Activated CD4-positive, alpha-beta T cell treated with anti-CD3 and anti-CD28 coated beads for 36 hours (primary cell): ENCODE measurements at regions of chr19 and their contacts with region 1.

Region 1: GRCh38 chr19:18588611-18589379 is at the start of gene REX1BD:
- DNase-seq: peak; percentile 91
- ATAC-seq: peak; percentile 81
- H3K4me3 Mint-ChIP-seq: peak within 1 kb of the TSS; percentile 90
- H3K27ac Mint-ChIP-seq: peak within 1 kb of the TSS; percentile 92
- H3K4me1 Mint-ChIP-seq: peaks cover 31% of the 10 kb centered on the region
- H3K27me3 Mint-ChIP-seq: no peaks in the 10 kb centered on the region
- total RNA-seq, gene REX1BD: 47.8 to 81.3 TPM

Region 2: DNA sequence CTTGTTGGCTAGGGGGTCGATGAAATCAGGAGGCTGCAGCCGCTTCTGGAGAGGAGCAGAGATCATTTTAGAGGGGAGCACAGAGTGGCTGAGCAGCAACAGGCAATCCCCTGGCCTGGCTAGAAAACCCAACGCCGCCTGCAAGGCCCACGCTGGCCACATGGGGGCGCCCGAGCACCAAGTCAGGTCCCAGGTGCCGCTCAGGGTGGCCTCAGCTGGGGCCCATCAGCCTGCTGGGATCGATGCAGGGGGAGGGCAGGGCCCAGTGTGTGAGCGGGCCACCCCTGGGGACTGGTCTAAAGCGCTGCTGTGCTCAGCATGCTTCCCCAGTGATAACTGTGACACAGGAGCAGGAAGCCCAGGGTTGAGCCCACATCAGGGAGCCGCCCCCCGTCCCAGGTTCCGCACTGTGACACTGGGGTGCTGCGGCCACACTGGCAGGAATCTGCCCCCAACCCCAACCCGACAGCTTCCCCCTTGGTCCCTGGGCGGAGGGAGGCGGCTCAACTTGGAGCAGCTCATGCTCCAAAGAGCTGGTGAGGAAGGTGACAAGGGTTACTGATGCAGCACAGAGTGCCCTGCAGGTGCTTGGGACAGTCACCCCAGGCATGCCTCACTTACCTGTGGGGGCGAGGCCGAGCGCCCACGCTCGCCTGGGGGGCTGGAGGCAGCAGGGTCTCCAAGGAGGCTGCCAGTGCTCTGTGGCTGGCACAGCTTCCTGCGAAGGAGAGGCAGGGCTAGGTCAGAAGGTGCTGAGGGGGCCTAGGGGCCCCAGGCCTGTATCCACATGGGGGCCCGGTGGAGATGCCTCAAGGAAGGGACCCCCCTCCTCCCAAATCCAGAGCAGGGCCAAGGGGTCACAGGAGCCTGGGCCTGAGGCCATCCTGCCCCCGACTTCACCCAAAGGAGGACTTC is 137.6 kb before region 1 on chr19:
- CTCF ChIA-PET with region 1: no interaction called
- POLR2A ChIA-PET with region 1: no interaction called
- intact Hi-C with region 1: loop called in 1 of 2 experiments (anchors 5 kb)
- DNase-seq: peak; percentile 94
- ATAC-seq: peak; percentile 95
- H3K4me3 Mint-ChIP-seq: no peak overlapping the region
- H3K27ac Mint-ChIP-seq: peak overlapping the region; percentile 51
- H3K4me1 Mint-ChIP-seq: no peaks in the 10 kb centered on the region
- H3K27me3 Mint-ChIP-seq: no peaks in the 10 kb centered on the region

Region 3: GRCh38 chr19:18557474-18558201 is 31.2 kb before region 1 on chr19 and contains the start of gene KXD1:
- CTCF ChIA-PET with region 1: interaction called, 6 read pairs
- POLR2A ChIA-PET with region 1: interaction called, 11 read pairs
- intact Hi-C with region 1: loop called in 1 of 2 experiments (anchors 1 kb)
- DNase-seq: peak; percentile 99
- ATAC-seq: peak; percentile 99
- H3K4me3 Mint-ChIP-seq: peak within 1 kb of the TSS; percentile 91
- H3K27ac Mint-ChIP-seq: peak within 1 kb of the TSS; percentile 95
- H3K4me1 Mint-ChIP-seq: peaks cover 20% of the 10 kb centered on the region
- H3K27me3 Mint-ChIP-seq: no peaks in the 10 kb centered on the region
- total RNA-seq, gene KXD1: 121 to 170 TPM

Region 4: DNA sequence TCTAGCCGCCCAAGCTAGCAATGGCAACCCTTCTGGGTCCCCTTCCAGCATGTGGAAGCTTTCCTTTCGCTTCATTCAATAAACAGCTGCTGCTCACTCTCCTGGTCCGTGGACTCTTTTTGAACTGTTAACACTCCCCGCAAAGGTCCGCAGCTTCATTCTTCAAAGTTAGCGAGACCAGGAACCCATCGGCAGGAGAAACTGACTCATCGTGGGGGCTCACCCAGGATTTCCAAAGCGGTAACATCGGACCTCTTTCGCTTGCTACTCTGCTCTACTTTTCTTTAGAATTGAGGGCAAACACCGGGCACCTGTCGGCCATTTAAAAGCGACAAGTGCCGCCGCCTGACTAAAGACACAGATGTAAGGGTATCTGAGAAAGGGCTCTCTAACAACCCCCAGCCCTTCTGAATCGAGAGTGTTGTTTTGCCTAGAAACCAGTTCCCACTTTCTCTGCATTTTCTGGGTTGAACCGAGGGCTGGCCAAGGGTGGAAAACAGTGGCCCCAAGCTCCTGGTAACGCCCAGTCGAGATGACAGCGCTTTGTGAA is 11.4 kb before region 1 on chr19:
- CTCF ChIA-PET with region 1: interaction called, 21 read pairs
- POLR2A ChIA-PET with region 1: interaction called, 4 read pairs
- intact Hi-C with region 1: no loop called
- DNase-seq: no peak
- ATAC-seq: no peak
- H3K4me3 Mint-ChIP-seq: no peak overlapping the region
- H3K27ac Mint-ChIP-seq: no peak overlapping the region
- H3K4me1 Mint-ChIP-seq: peaks cover 23% of the 10 kb centered on the region
- H3K27me3 Mint-ChIP-seq: no peaks in the 10 kb centered on the region

Region 5: GRCh38 chr19:18683213-18683939 is 94.6 kb after region 1 on chr19 and contains the start of gene CRTC1:
- CTCF ChIA-PET with region 1: no interaction called
- POLR2A ChIA-PET with region 1: interaction called, 3 read pairs
- intact Hi-C with region 1: loop called (anchors 2 to 5 kb)
- DNase-seq: peak; percentile 95
- ATAC-seq: peak; percentile 91
- H3K4me3 Mint-ChIP-seq: peak within 1 kb of the TSS; percentile 83
- H3K27ac Mint-ChIP-seq: peak within 1 kb of the TSS; percentile 89
- H3K4me1 Mint-ChIP-seq: peaks cover 16% of the 10 kb centered on the region
- H3K27me3 Mint-ChIP-seq: no peaks in the 10 kb centered on the region
- total RNA-seq, gene CRTC1: 5.3 to 9.7 TPM

Region 6: DNA sequence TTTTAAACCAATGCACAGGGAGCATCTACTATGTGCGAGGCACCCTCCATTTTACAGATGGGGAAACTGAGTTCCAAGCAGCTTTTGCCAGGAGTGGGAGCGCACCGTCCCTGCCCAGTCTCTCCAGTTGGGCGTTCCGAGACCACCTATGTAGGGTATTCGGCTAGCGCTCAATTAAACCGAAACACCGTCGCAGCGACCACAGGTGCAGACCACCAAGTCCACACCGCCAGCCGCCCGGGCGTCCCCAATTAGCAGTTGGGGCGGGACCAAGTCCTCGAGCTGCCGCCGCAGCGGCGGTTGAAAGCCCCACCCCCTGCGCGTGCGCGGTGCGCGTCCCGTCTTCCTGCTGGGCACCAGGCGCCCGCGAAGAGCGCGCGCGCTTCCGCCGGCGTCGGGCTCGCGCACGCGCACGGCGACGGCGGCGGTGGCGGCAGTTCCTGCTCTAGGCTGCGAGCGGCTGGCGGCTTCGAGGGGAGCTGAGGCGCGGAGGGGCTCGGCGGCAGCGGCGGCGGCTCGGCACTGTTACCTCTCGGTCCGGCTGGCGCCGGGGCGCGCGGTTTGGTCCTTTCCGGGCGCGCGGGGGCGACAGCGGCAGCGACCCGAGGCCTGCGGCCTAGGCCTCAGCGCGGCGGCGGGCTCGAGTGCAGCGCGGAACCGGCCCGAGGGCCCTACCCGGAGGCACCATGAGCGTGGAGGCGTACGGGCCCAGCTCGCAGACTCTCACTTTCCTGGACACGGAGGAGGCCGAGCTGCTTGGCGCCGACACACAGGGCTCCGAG is 242.9 kb after region 1 on chr19 and contains the start of gene UPF1:
- CTCF ChIA-PET with region 1: interaction called, 8 read pairs
- POLR2A ChIA-PET with region 1: interaction called, 3 read pairs
- intact Hi-C with region 1: loop called in 1 of 2 experiments (anchors 1 kb)
- DNase-seq: peak; percentile 98
- ATAC-seq: peak; percentile 82
- H3K4me3 Mint-ChIP-seq: peak within 1 kb of the TSS; percentile 96
- H3K27ac Mint-ChIP-seq: peak within 1 kb of the TSS; percentile 90
- H3K4me1 Mint-ChIP-seq: peaks cover 34% of the 10 kb centered on the region
- H3K27me3 Mint-ChIP-seq: peaks cover 3% of the 10 kb centered on the region
- total RNA-seq, gene UPF1: 72.4 to 74.0 TPM

Region 7: GRCh38 chr19:19033426-19034203 is 444.8 kb after region 1 on chr19 and contains the starts of genes ARMC6 and SUGP2:
- CTCF ChIA-PET with region 1: interaction called, 3 read pairs
- POLR2A ChIA-PET with region 1: no interaction called
- intact Hi-C with region 1: loop called in 1 of 2 experiments (anchors 2 kb)
- DNase-seq: peak; percentile 92
- ATAC-seq: peak; percentile 78
- H3K4me3 Mint-ChIP-seq: peak within 1 kb of the TSS; percentile 98
- H3K27ac Mint-ChIP-seq: peak within 1 kb of the TSS; percentile 96
- H3K4me1 Mint-ChIP-seq: peaks cover 31% of the 10 kb centered on the region
- H3K27me3 Mint-ChIP-seq: no peaks in the 10 kb centered on the region
- total RNA-seq, gene ARMC6: 33.0 to 40.8 TPM
- total RNA-seq, gene SUGP2: 89.8 to 104 TPM